ENCODE measurements at regions of chr6 and their contacts with region 1.

Region 1: GRCh38 chr6:75893058-75893775 is 144.2 kb downstream of the MYO6 start:
- DNase-seq: no peak
- ATAC-seq: peak; percentile 37
- H3K4me3 Mint-ChIP-seq: no peak overlapping the region
- H3K27ac Mint-ChIP-seq: no peak overlapping the region
- H3K4me1 Mint-ChIP-seq: peaks cover 2% of the 10 kb centered on the region
- H3K27me3 Mint-ChIP-seq: no peaks in the 10 kb centered on the region
- CTCF ChIP-seq: peak; percentile 77

Region 2: GRCh38 chr6:75657327-75657726 is 235.9 kb before region 1 on chr6:
- CTCF ChIA-PET with region 1: no interaction called
- POLR2A ChIA-PET with region 1: no interaction called
- intact Hi-C with region 1: no loop called
- DNase-seq: no peak
- ATAC-seq: no peak
- H3K4me3 Mint-ChIP-seq: no peak overlapping the region
- H3K27ac Mint-ChIP-seq: peak overlapping the region; percentile 26
- H3K4me1 Mint-ChIP-seq: peaks cover 7% of the 10 kb centered on the region
- H3K27me3 Mint-ChIP-seq: no peaks in the 10 kb centered on the region
- CTCF ChIP-seq: no peak

Region 3: GRCh38 chr6:75874224-75874623 is 19.0 kb before region 1 on chr6:
- CTCF ChIA-PET with region 1: interaction called, 29 read pairs
- POLR2A ChIA-PET with region 1: no interaction called
- intact Hi-C with region 1: no loop called
- DNase-seq: no peak
- ATAC-seq: no peak
- H3K4me3 Mint-ChIP-seq: no peak overlapping the region
- H3K27ac Mint-ChIP-seq: no peak overlapping the region
- H3K4me1 Mint-ChIP-seq: no peaks in the 10 kb centered on the region
- H3K27me3 Mint-ChIP-seq: no peaks in the 10 kb centered on the region
- CTCF ChIP-seq: no peak

Region 4: GRCh38 chr6:75882734-75883133 is 10.5 kb before region 1 on chr6:
- CTCF ChIA-PET with region 1: interaction called, 23 read pairs
- POLR2A ChIA-PET with region 1: no interaction called
- intact Hi-C with region 1: no loop called
- DNase-seq: no peak
- ATAC-seq: no peak
- H3K4me3 Mint-ChIP-seq: no peak overlapping the region
- H3K27ac Mint-ChIP-seq: no peak overlapping the region
- H3K4me1 Mint-ChIP-seq: no peaks in the 10 kb centered on the region
- H3K27me3 Mint-ChIP-seq: no peaks in the 10 kb centered on the region
- CTCF ChIP-seq: no peak

Region 5: DNA sequence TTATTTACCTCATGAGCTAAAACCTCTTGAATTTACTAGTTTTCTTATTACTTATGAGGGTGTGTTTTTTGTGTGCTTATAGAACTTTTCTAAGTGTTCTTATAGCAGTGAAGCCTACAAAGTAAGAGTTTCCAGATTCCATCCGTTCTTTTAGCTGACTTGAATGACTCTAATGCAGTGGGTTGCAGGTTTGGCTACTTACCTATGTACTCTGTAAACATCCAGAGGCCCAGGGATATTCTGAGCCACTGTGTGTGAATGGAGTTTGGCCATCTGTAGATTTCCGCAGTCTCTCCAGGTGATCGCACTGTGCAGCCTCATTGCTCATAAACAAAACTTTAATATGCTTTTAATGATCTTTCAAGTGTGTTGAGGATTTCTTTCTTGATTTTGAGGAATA is 13.7 kb after region 1 on chr6:
- CTCF ChIA-PET with region 1: interaction called, 12 read pairs
- POLR2A ChIA-PET with region 1: no interaction called
- intact Hi-C with region 1: no loop called
- DNase-seq: no peak
- ATAC-seq: no peak
- H3K4me3 Mint-ChIP-seq: no peak overlapping the region
- H3K27ac Mint-ChIP-seq: no peak overlapping the region
- H3K4me1 Mint-ChIP-seq: no peaks in the 10 kb centered on the region
- H3K27me3 Mint-ChIP-seq: no peaks in the 10 kb centered on the region
- CTCF ChIP-seq: no peak

Region 6: DNA sequence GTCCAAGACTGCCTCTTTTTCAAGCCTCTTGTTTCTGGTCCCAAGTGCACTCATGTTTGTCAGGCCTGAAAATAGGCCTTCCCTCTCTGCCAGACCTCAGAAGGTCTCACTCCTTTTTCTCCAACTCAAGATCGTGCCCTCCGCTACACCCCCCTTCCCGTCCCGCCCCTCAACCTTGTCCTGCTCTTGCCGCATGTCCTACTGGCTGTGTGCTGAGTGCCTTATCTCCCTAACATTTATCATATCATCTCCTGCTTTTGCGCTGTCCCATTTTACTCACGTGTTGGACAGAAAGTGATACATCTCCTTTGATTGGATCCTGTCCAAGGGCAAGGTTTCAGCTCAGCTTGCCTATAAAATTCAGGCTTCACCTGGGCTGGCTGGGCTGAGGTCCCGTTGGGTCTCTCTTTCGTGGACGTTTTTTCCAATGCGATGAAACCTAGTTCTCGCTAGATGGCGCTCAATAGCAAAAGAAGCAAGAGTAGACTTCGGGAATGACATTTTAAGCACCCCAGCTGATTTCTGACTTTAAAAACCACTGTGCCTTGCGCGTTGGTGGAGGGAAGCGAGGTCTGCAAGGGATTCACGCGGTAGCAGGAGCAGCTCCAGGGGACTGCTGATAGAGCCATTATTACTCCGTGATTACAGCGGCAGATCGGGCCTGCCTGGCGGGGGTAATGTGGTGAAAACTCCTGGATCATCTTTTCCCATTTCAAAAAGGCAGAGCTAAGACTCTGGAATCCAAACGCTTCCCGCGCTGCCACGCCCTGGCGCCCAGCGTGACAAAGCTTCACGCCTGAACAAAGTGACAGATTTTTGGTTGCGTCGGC is 41.6 kb after region 1 on chr6:
- CTCF ChIA-PET with region 1: interaction called, 21 read pairs
- POLR2A ChIA-PET with region 1: no interaction called
- intact Hi-C with region 1: no loop called
- DNase-seq: peak; percentile 33
- ATAC-seq: peak; percentile 74
- H3K4me3 Mint-ChIP-seq: peak overlapping the region; percentile 31
- H3K27ac Mint-ChIP-seq: no peak overlapping the region
- H3K4me1 Mint-ChIP-seq: peaks cover 7% of the 10 kb centered on the region
- H3K27me3 Mint-ChIP-seq: peaks cover 31% of the 10 kb centered on the region
- CTCF ChIP-seq: peak; percentile 81

Region 7: GRCh38 chr6:75952128-75952527 is 58.9 kb after region 1 on chr6:
- CTCF ChIA-PET with region 1: no interaction called
- POLR2A ChIA-PET with region 1: no interaction called
- intact Hi-C with region 1: no loop called
- DNase-seq: no peak
- ATAC-seq: no peak
- H3K4me3 Mint-ChIP-seq: no peak overlapping the region
- H3K27ac Mint-ChIP-seq: no peak overlapping the region
- H3K4me1 Mint-ChIP-seq: no peaks in the 10 kb centered on the region
- H3K27me3 Mint-ChIP-seq: peaks cover 1% of the 10 kb centered on the region
- CTCF ChIP-seq: no peak

Region 8: DNA sequence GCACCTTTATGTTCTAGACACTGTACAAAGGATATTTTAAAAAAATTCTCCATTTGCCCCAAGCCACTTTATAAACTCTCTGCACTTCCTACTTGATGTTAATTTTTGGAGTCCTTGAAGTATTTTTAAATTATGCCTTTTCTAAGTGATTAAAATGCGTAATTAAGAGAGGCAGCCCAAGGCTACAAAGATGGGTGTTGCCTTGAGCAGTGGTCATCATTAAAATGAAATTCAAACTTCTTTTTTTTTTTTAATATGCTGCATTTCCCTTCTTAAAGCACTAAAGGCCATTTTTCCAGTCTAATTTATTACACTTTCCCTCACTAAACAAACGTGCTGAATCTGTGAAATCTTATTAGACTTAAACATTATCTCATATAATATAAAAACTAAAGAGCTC is 76.9 kb after region 1 on chr6:
- CTCF ChIA-PET with region 1: no interaction called
- POLR2A ChIA-PET with region 1: no interaction called
- intact Hi-C with region 1: no loop called
- DNase-seq: no peak
- ATAC-seq: no peak
- H3K4me3 Mint-ChIP-seq: no peak overlapping the region
- H3K27ac Mint-ChIP-seq: no peak overlapping the region
- H3K4me1 Mint-ChIP-seq: no peaks in the 10 kb centered on the region
- H3K27me3 Mint-ChIP-seq: no peaks in the 10 kb centered on the region
- CTCF ChIP-seq: no peak

Region 9: DNA sequence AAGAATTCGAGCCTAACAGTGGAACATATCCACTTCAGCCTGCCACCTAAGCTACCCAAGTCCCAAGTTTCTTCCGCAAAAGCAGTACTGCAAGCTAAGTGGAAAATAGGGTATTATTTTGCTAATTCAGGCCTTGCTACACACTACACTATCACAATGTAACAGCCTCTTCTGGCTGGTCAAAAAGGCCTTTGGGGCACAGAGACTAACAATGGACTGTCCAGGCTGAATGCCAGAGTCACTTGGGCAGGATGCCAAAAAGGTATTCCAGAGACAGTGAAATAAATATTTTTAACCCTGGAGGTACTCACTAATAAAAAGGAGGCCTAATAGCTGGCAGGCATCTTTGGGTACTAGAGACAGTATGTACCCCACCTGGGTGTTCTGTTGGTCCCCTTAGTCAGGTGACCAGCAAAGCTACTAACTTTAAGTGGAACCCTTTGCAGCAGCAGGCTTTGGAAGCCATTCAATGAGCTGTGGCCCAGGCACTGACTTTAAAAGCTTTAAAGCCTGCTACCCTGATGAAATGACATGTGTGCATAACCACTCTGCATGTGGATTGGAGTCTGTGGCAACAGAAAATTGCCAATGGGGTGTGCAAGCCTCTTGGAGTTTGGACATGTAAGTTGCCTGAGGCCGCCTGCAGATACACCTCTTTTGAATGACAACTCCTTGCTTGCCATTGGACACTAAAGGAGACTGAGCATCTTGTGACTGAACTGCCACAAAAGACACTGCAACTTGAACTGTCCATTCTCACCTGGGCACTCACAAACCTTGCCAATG is 878.0 kb after region 1 on chr6:
- CTCF ChIA-PET with region 1: no interaction called
- POLR2A ChIA-PET with region 1: no interaction called
- intact Hi-C with region 1: no loop called
- DNase-seq: no peak
- ATAC-seq: no peak
- H3K4me3 Mint-ChIP-seq: no peak overlapping the region
- H3K27ac Mint-ChIP-seq: no peak overlapping the region
- H3K4me1 Mint-ChIP-seq: no peaks in the 10 kb centered on the region
- H3K27me3 Mint-ChIP-seq: no peaks in the 10 kb centered on the region
- CTCF ChIP-seq: no peak

Region 10: DNA sequence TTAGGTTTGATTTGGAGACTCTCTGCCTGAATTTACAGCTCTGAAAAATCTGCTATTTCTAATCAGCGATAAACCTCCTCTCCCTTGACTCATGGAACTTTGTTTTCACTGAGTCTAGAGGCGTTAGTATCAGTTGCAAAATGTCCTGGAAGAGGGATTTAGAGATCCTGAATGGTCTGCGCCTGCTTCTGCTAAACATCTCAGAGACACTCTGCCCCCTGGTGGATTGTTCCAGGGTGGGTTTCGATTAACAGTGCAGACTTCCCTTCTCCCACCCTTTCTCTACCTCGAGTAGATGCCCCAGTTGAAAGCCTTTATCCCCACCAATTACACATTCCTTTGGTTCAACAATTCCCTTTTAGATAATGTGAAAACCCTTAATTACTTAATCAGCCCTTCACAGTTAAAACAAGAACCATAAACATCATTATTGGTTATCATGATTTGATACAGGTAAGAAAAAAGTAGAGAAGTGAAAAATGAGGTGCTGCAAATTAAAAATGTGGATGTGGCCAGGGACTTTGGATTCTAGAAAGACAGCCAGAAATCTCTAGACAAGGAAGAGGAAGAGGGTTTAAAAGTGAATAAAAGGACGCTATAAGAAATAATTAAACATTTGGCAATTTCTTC is 1564.6 kb after region 1 on chr6:
- CTCF ChIA-PET with region 1: interaction called, 11 read pairs
- POLR2A ChIA-PET with region 1: no interaction called
- intact Hi-C with region 1: loop called (anchors 5 kb)
- DNase-seq: peak; percentile 69
- ATAC-seq: no peak
- H3K4me3 Mint-ChIP-seq: no peak overlapping the region
- H3K27ac Mint-ChIP-seq: no peak overlapping the region
- H3K4me1 Mint-ChIP-seq: peaks cover 1% of the 10 kb centered on the region
- H3K27me3 Mint-ChIP-seq: peaks cover 29% of the 10 kb centered on the region
- CTCF ChIP-seq: peak; percentile 48